PC-3 (cell line): ENCODE measurements at regions of chr2 and their contacts with region 1.

Region 1: GRCh38 chr2:222127660-222128059 is 171.1 kb downstream of the PAX3 start:
- DNase-seq: no peak
- ATAC-seq: no peak
- H3K4me3 ChIP-seq: no peak overlapping the region
- H3K27ac ChIP-seq: no peak overlapping the region
- H3K4me1 ChIP-seq: no peaks in the 10 kb centered on the region
- H3K27me3 ChIP-seq: peaks cover 53% of the 10 kb centered on the region
- CTCF ChIP-seq: no peak

Region 2: DNA sequence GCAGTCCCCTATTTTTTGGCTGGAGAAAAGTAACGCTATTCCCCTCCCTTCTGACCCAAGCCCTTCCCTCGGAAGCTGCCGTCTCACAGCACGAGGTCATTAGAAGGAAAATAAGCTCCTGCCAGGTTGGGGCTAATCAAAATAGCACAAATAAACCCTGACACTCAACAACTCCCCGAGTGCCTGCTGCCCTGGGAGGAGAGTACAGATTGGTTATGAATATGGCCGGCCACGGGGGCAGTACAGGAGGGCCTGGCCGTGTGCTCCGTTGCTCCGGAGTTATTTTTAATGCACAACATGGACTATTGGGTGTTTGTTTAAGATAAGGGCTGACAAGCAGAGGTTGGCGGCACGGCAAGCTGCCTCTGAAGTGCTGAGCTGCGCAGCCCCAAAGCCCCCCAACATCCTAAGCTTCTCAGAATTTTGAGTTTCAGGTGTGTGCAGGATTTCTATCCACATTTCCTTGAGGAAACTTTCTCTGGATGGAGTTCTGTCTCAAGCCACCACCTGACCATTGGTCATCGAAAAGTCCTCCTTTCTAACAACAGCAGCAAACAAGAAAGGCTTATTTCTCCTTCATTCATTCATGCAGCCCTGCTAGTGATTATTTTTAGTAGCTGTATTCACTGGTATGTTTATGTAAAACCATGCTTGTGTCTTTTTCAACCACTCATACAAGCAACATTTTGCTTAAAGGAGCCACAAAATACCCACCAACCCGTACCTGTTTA is 112.5 kb after region 1 on chr2:
- CTCF ChIA-PET with region 1: no interaction called
- POLR2A ChIA-PET with region 1: no interaction called
- intact Hi-C with region 1: no loop called
- DNase-seq: no peak
- ATAC-seq: no peak
- H3K4me3 ChIP-seq: no peak overlapping the region
- H3K27ac ChIP-seq: no peak overlapping the region
- H3K4me1 ChIP-seq: no peaks in the 10 kb centered on the region
- H3K27me3 ChIP-seq: peaks cover 93% of the 10 kb centered on the region
- CTCF ChIP-seq: no peak

Region 3: DNA sequence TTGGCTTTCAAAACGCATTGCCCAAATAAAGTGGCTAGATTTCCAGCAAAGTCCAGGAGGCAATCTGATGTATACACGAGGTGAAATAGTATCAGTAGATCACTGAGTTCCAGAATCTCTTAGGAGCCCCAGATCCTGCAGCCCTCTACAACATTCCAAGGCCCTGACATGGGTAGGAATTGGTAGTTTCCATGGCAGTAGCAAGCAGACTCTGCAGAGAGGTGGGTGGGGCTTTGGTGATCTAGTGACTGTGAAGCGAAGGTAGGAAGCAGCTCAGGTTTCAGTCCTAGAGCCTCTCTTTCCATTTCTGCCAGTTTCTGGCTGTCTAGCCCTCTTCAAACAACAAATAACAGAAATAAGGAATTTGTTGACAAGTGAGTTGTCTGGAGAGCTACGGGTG is 282.9 kb after region 1 on chr2:
- CTCF ChIA-PET with region 1: no interaction called
- POLR2A ChIA-PET with region 1: no interaction called
- intact Hi-C with region 1: loop called (anchors 5 kb)
- DNase-seq: peak; percentile 8
- ATAC-seq: no peak
- H3K4me3 ChIP-seq: no peak overlapping the region
- H3K27ac ChIP-seq: no peak overlapping the region
- H3K4me1 ChIP-seq: no peaks in the 10 kb centered on the region
- H3K27me3 ChIP-seq: peaks cover 9% of the 10 kb centered on the region; the same call in 1 of the 2 replicates
- CTCF ChIP-seq: no peak